K562 (cell line): ENCODE measurements at regions of chr19 and their contacts with region 1.

Region 1: GRCh38 chr19:41959056-41960053 is at the start of gene RABAC1:
- DNase-seq: peak; percentile 92 to 93 (median 92)
- ATAC-seq: peak; percentile 93
- H3K4me3 ChIP-seq: peak within 1 kb of the TSS; percentile 61
- H3K27ac ChIP-seq: peak within 1 kb of the TSS; percentile 60
- H3K4me1 ChIP-seq: peaks cover 15 to 40% of the 10 kb centered on the region in 2 experiments; a peak in 4 of 5 replicates
- H3K27me3 ChIP-seq: no peaks in the 10 kb centered on the region
- CTCF ChIP-seq: peak; percentile 51 to 60 (median 59)
- EP300 ChIP-seq: peak; percentile 15; the same call in 1 of the 2 replicates
- POLR2A ChIP-seq: no peak; the same call in 1 of the 2 replicates
- RAD21 ChIP-seq: peak; percentile 30 to 46
- polyA plus RNA-seq, gene RABAC1: 5.2 to 9.3 TPM

Region 2: DNA sequence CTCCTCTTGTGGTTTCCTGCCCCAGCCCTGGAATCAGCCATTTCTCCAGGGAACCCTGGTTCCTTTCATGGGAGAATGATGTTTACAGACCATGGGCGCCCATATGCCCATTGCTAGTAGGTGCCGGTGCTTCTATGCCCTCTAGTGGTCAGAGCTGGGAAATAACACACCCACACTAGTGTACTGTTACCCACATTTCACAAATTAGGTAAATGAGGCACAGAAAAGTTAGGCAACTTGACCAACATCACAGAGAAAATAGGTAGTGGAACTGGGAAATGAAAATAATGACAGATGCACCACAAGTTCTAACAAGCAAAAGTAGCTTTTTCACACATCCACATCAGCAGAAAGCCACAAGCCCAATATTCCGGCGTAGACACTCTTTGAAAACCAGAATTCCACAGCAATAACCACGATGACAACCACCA is 164.3 kb before region 1 on chr19:
- CTCF ChIA-PET with region 1: interaction called, 7 read pairs
- POLR2A ChIA-PET with region 1: no interaction called
- in situ Hi-C with region 1: loop called (anchors 10 kb)
- intact Hi-C with region 1: no loop called
- DNase-seq: peak; percentile 18 to 61 (median 35)
- ATAC-seq: peak; percentile 93
- H3K4me3 ChIP-seq: no peak overlapping the region
- H3K27ac ChIP-seq: no peak overlapping the region
- H3K4me1 ChIP-seq: no peaks in the 10 kb centered on the region
- H3K27me3 ChIP-seq: peaks cover 2 to 23% of the 10 kb centered on the region in 2 experiments; a peak in 3 of 5 replicates
- CTCF ChIP-seq: peak; percentile 63 to 83 (median 66)
- EP300 ChIP-seq: no peak
- POLR2A ChIP-seq: no peak
- RAD21 ChIP-seq: no peak

Region 3: GRCh38 chr19:41859618-41860418 is 99.5 kb before region 1 on chr19 and contains the start of gene RPS19:
- CTCF ChIA-PET with region 1: interaction called, 10 read pairs
- POLR2A ChIA-PET with region 1: interaction called, 9 read pairs
- in situ Hi-C with region 1: no loop called
- intact Hi-C with region 1: no loop called
- DNase-seq: peak; percentile 93 to 99 (median 95)
- ATAC-seq: peak; percentile 93
- H3K4me3 ChIP-seq: peak within 1 kb of the TSS; percentile 93
- H3K27ac ChIP-seq: peak within 1 kb of the TSS; percentile 99
- H3K4me1 ChIP-seq: peaks cover 25 to 30% of the 10 kb centered on the region in 2 experiments
- H3K27me3 ChIP-seq: no peaks in the 10 kb centered on the region
- CTCF ChIP-seq: peak; percentile 71 to 82 (median 76)
- EP300 ChIP-seq: peak; percentile 40
- POLR2A ChIP-seq: peak; percentile 97
- RAD21 ChIP-seq: 0 out of 4 replicates have a peak, but pooled peaks of 1 of the 2 experiments have one; percentile 1
- polyA plus RNA-seq, gene RPS19: 3,130 to 3,408 TPM

Region 4: GRCh38 chr19:42023121-42023942 is 64.0 kb after region 1 on chr19:
- CTCF ChIA-PET with region 1: interaction called, 3 read pairs
- POLR2A ChIA-PET with region 1: no interaction called
- in situ Hi-C with region 1: no loop called
- intact Hi-C with region 1: loop called (anchors 1 kb)
- DNase-seq: peak; percentile 60 to 81 (median 67)
- ATAC-seq: peak; percentile 96
- H3K4me3 ChIP-seq: no peak overlapping the region
- H3K27ac ChIP-seq: no peak overlapping the region
- H3K4me1 ChIP-seq: peaks cover 9 to 19% of the 10 kb centered on the region in 2 experiments
- H3K27me3 ChIP-seq: peaks cover 6 to 25% of the 10 kb centered on the region in 2 experiments; a peak in 4 of 5 replicates
- CTCF ChIP-seq: peak; percentile 92 to 94 (median 94)
- EP300 ChIP-seq: no peak
- POLR2A ChIP-seq: no peak
- RAD21 ChIP-seq: peak; percentile 84 to 95

Region 5: DNA sequence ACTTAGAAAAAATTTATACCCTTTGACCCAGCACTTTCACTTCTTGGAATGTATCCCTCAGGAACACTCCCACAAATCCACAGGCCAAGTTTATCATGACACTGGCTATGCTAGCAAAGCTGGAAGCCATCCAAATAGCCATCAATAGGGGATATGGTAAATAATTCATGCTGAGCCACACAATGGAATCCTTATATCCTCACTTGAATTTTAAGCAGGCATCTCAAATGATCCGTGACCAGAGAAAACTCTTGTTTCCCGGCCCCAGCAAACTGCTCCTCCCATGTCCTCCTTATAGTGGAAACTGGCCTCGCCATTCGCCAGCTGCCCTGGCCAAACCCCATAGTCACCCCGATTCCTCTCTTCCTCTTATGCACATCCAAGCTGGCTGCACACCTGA is 73.1 kb after region 1 on chr19:
- CTCF ChIA-PET with region 1: no interaction called
- POLR2A ChIA-PET with region 1: no interaction called
- in situ Hi-C with region 1: no loop called
- intact Hi-C with region 1: loop called (anchors 1 kb)
- DNase-seq: no peak
- ATAC-seq: no peak
- H3K4me3 ChIP-seq: no peak overlapping the region
- H3K27ac ChIP-seq: no peak overlapping the region
- H3K4me1 ChIP-seq: no peaks in the 10 kb centered on the region
- H3K27me3 ChIP-seq: peaks cover 19 to 42% of the 10 kb centered on the region in 2 experiments
- CTCF ChIP-seq: no peak
- EP300 ChIP-seq: no peak
- POLR2A ChIP-seq: no peak
- RAD21 ChIP-seq: no peak